ENCODE measurements at regions of chr1 and their contacts with region 1.

Region 1: GRCh38 chr1:225777583-225778336 is at the start of gene SRP9:
- DNase-seq: peak; percentile 100
- H3K4me3 Mint-ChIP-seq: no peak within 1 kb of the TSS
- H3K27ac Mint-ChIP-seq: no peak within 1 kb of the TSS
- H3K4me1 Mint-ChIP-seq: peaks cover 22% of the 10 kb centered on the region
- H3K27me3 Mint-ChIP-seq: no peaks in the 10 kb centered on the region
- total RNA-seq, gene SRP9: 232 and 244 TPM in 2 replicates

Region 2: DNA sequence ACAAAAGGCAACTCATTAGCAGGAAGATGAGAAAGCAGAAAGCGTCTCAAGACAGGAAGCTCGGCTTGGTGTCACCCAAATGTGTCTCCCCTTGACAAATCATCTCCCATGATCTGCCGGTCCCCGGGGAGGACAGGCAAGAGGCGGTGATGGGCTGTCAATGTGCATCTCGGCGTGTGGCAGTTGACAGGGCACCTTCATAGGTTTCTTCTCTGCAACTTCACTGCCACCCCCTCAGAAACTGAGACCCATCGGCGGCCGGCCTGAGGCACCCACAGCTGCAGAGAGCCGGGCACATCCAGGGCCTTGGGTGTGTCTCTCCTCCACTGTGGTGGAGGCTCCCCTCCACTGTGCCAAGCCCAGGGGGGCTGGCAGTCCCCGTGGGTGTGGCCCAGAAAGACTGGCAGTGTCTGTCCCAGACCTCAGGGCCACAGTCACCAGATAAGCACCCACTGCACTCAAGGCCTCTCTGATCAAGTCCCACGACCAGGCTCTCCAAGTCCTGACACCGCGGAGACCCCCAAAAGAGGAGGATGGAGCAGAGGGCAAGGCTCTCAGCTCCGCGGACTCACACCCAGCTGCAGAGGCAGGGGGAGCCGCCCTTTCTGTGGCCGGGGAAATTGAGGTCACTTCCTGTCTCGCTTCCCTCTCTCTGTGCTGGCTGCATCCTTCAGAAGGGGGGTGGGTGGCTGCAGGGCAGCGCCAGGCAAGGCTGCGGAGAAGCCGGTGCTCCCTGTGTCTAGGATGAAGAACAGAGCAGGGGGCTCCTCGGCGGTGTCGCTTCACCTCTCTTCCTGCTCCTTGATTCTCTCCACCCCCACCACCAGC is 310.4 kb before region 1 on chr1:
- intact Hi-C with region 1: loop called (anchors 1 kb)
- DNase-seq: peak; percentile 95
- H3K4me3 Mint-ChIP-seq: peak overlapping the region; percentile 94
- H3K27ac Mint-ChIP-seq: peak overlapping the region; percentile 98
- H3K4me1 Mint-ChIP-seq: peaks cover 39% of the 10 kb centered on the region
- H3K27me3 Mint-ChIP-seq: no peaks in the 10 kb centered on the region

Region 3: GRCh38 chr1:225627304-225627947 is 150.3 kb before region 1 on chr1:
- intact Hi-C with region 1: no loop called
- DNase-seq: no peak
- H3K4me3 Mint-ChIP-seq: no peak overlapping the region
- H3K27ac Mint-ChIP-seq: no peak overlapping the region
- H3K4me1 Mint-ChIP-seq: no peaks in the 10 kb centered on the region
- H3K27me3 Mint-ChIP-seq: peaks cover 21% of the 10 kb centered on the region

Region 4: DNA sequence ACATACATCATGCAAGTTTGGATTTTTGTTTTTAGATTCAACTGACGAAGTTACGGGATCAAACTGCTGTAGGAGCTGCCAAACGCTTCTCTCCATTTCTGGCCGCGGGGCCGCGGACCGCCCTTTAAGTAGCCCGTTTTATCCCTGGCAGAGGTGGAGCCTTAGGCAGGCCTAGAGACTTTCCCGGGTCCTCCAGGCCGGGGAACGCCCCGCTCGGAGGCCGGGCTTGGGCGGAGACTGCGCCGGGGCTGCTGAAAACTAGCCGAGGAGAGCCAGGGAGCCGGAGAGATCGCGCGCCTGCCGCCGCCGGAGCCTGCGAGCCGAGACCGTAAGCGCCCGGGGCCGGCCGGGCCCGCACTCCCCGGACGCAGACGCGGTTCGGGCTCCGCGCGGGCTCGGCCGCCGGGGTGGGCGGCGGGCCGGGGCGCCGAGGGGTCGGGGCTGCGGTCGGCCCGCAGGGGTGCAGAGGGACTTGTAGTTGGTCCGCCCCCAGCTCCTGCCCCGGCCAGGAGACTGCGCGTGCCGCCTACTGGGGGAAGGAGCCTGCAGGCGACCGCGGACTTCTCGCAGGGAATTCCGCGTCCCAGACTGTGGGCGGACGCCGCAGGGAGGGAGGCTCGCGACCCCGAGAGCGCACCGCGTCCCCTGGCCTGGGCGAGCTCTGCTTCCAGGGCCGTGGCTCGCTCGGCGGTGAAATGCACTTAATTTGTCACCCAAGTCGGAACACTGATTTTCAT is 32.2 kb after region 1 on chr1 and contains the start of gene EPHX1:
- intact Hi-C with region 1: loop called (anchors 2 kb)
- DNase-seq: peak; percentile 94
- H3K4me3 Mint-ChIP-seq: peak within 1 kb of the TSS; percentile 90
- H3K27ac Mint-ChIP-seq: peak within 1 kb of the TSS; percentile 67
- H3K4me1 Mint-ChIP-seq: peaks cover 8% of the 10 kb centered on the region
- H3K27me3 Mint-ChIP-seq: peaks cover 22% of the 10 kb centered on the region
- total RNA-seq, gene EPHX1: 1.6 and 1.8 TPM in 2 replicates

Region 5: GRCh38 chr1:225881969-225882693 is 104.4 kb after region 1 on chr1 and contains the start of gene TMEM63A:
- intact Hi-C with region 1: loop called (anchors 1 kb)
- DNase-seq: peak; percentile 97
- H3K4me3 Mint-ChIP-seq: peak within 1 kb of the TSS; percentile 85
- H3K27ac Mint-ChIP-seq: peak within 1 kb of the TSS; percentile 87
- H3K4me1 Mint-ChIP-seq: peaks cover 43% of the 10 kb centered on the region
- H3K27me3 Mint-ChIP-seq: peaks cover 14% of the 10 kb centered on the region
- total RNA-seq, gene TMEM63A: 23.0 and 28.5 TPM in 2 replicates

Region 6: GRCh38 chr1:225911191-225912130 is 133.7 kb after region 1 on chr1:
- intact Hi-C with region 1: loop called (anchors 2 kb)
- DNase-seq: peak; percentile 93
- H3K4me3 Mint-ChIP-seq: no peak overlapping the region
- H3K27ac Mint-ChIP-seq: no peak overlapping the region
- H3K4me1 Mint-ChIP-seq: peaks cover 11% of the 10 kb centered on the region
- H3K27me3 Mint-ChIP-seq: peaks cover 8% of the 10 kb centered on the region

Region 7: GRCh38 chr1:225999227-225999911 is 221.6 kb after region 1 on chr1 and contains the start of gene SDE2:
- intact Hi-C with region 1: loop called (anchors 1 kb)
- DNase-seq: peak; percentile 100
- H3K4me3 Mint-ChIP-seq: peak within 1 kb of the TSS; percentile 97
- H3K27ac Mint-ChIP-seq: peak within 1 kb of the TSS; percentile 99
- H3K4me1 Mint-ChIP-seq: peaks cover 53% of the 10 kb centered on the region
- H3K27me3 Mint-ChIP-seq: no peaks in the 10 kb centered on the region
- total RNA-seq, gene SDE2: 26.9 and 27.1 TPM in 2 replicates

Region 8: GRCh38 chr1:226109829-226110248 is 332.1 kb after region 1 on chr1:
- intact Hi-C with region 1: loop called (anchors 5 kb)
- DNase-seq: peak; percentile 95
- H3K4me3 Mint-ChIP-seq: peak overlapping the region; percentile 89
- H3K27ac Mint-ChIP-seq: peak overlapping the region; percentile 80
- H3K4me1 Mint-ChIP-seq: peaks cover 24% of the 10 kb centered on the region
- H3K27me3 Mint-ChIP-seq: peaks cover 8% of the 10 kb centered on the region

Measured in activated CD4-positive, alpha-beta T cell treated with anti-CD3 and anti-CD28 coated beads, Interleukin-2, amount 10 ng/mL, durations not matched to agents 24 days and 14 days (primary cell).